Activated CD4-positive, alpha-beta memory T cell treated with anti-CD3 and anti-CD28 coated beads for 36 hours (primary cell): ENCODE measurements at regions of chr2 and their contacts with region 1.

Region 1: DNA sequence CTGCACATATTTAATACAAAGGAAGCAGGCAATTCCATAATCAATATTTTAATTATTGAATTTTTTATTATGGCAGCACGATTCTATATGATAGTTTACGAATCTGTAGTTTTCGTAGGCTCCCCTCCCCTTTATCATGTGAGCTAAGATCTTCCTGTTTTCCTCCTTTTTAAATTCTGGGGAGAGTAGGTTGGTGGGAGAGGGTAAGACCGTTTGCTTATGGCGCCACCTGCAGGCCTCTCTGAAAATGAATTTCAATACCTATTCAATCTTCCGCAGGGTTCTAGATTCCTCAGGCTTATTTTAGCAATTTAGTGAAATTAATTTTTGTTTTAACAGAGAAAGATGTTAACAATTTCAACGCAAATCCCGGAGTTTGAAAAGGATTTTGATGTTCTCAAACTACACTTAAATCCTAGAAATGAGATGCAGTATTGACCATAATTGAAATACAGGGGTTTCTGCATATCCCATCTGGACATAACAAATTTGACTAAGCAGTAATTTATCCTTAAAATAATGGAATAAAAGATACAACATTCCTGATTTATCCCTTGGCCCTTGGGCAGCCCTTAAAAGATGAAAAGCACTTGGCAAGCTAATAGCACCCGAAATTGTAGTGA is 12.8 kb upstream of the GBX2 start:
- DNase-seq: peak; percentile 49
- H3K4me3 Mint-ChIP-seq: no peak overlapping the region
- H3K27ac Mint-ChIP-seq: peak overlapping the region; percentile 30
- H3K4me1 Mint-ChIP-seq: peaks cover 7% of the 10 kb centered on the region
- H3K27me3 Mint-ChIP-seq: peaks cover 63% of the 10 kb centered on the region

Region 2: GRCh38 chr2:234951664-234952269 is 1229.2 kb before region 1 on chr2 and contains the start of gene SH3BP4:
- CTCF ChIA-PET with region 1: no interaction called
- POLR2A ChIA-PET with region 1: no interaction called
- intact Hi-C with region 1: loop called (anchors 5 kb)
- DNase-seq: peak; percentile 53
- H3K4me3 Mint-ChIP-seq: peak within 1 kb of the TSS; percentile 64
- H3K27ac Mint-ChIP-seq: no peak within 1 kb of the TSS
- H3K4me1 Mint-ChIP-seq: peaks cover 3% of the 10 kb centered on the region
- H3K27me3 Mint-ChIP-seq: peaks cover 50% of the 10 kb centered on the region
- total RNA-seq, gene SH3BP4: 0.10 to 0.46 TPM

Region 3: DNA sequence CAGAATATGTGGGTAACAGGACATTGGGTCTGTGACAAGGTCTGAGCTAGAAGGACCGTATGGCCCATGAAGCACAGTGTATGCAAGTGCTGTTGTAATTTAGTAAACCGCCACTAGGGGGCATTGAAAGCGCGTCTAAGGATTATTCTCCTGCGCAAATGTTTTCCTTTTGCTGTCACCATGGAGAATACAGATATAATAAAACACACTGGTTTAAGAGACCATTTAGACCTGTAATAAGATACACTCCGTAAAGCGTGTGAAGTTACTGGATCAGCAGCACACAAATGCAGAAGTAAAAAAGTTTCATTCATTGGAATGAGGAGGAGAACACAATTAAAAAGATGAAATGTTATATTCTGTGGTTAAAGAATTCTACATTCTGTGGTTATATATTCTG is 414.7 kb before region 1 on chr2:
- CTCF ChIA-PET with region 1: interaction called, 16 read pairs
- POLR2A ChIA-PET with region 1: no interaction called
- intact Hi-C with region 1: loop called (anchors 1 kb)
- DNase-seq: peak; percentile 58
- H3K4me3 Mint-ChIP-seq: no peak overlapping the region
- H3K27ac Mint-ChIP-seq: no peak overlapping the region
- H3K4me1 Mint-ChIP-seq: peaks cover 2% of the 10 kb centered on the region
- H3K27me3 Mint-ChIP-seq: peaks cover 5% of the 10 kb centered on the region

Region 4: GRCh38 chr2:235779444-235779896 is 401.5 kb before region 1 on chr2:
- CTCF ChIA-PET with region 1: interaction called, 27 read pairs
- POLR2A ChIA-PET with region 1: no interaction called
- intact Hi-C with region 1: loop called (anchors 1 kb)
- DNase-seq: peak; percentile 76
- H3K4me3 Mint-ChIP-seq: no peak overlapping the region
- H3K27ac Mint-ChIP-seq: no peak overlapping the region
- H3K4me1 Mint-ChIP-seq: no peaks in the 10 kb centered on the region
- H3K27me3 Mint-ChIP-seq: peaks cover 21% of the 10 kb centered on the region

Region 5: DNA sequence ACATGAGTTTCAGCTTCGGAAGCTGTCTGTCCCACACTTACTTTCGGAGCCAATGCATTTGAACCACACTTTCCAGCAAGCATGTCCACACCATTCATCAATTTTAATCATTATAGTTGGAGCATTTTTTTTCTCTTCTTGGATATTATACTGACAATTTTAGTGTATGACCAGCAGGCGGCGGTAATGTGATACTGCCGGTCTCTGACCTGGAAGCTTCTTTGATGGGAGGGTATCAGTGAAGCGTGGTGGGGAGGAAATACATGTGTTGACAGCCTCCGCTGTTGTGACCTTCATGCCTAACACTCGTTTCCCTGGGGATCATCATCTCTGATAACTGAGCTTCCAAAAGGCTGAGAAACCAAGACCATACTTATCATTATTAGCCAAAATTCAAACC is 244.4 kb before region 1 on chr2:
- CTCF ChIA-PET with region 1: interaction called, 6 read pairs
- POLR2A ChIA-PET with region 1: no interaction called
- intact Hi-C with region 1: loop called (anchors 10 kb)
- DNase-seq: no peak
- H3K4me3 Mint-ChIP-seq: no peak overlapping the region
- H3K27ac Mint-ChIP-seq: no peak overlapping the region
- H3K4me1 Mint-ChIP-seq: no peaks in the 10 kb centered on the region
- H3K27me3 Mint-ChIP-seq: peaks cover 9% of the 10 kb centered on the region

Region 6: DNA sequence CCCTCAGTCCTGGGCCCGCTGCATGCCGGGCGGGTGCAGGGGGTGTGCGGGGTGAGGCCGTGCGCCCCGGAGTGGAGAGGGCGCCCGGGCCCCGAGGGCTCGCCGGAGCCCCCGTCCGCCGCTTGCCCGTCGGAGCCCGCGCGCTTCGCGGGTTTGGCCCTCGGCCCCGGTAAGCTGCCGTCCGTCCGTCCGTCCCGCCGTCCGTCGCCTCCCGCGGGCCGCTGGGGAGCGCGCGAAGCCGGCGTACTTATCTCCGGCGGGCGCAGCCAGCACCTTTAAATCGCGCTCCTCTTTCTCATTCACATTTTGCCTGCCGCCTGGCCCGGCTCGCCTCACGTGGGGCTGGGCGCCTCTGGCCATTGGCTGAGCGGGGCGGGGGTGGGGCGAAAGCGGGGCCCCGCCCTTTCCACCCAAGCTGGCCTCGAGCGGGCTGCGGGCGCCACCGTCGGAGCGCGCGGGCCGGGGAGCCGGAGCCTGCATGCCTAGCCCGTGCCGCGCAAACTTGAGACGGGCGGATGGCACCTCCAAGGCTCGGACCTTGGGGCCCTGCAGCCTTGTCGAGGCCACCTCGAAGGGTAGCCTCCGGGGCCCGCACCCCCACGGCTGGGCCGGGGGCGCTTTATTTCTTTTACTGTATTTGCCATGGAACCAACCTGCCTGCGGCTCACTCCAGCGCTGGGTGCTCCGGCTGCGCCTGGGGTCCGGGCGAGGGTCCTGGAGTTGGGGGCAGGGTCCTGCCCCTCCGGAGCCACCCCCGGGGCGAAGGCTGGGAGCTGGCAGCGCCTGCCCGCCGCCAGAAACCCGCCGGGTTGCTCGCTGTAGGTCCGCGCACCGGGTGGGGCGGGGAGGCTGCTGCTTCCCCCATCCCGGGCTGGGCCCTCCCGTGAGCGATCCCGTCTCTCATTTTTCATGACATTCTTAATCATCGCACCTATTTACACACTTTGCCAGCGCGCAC is 12.6 kb before region 1 on chr2 and contains the start of gene GBX2:
- CTCF ChIA-PET with region 1: interaction called, 12 read pairs
- POLR2A ChIA-PET with region 1: no interaction called
- intact Hi-C with region 1: loop called (anchors 1 kb)
- DNase-seq: no peak
- H3K4me3 Mint-ChIP-seq: no peak within 1 kb of the TSS
- H3K27ac Mint-ChIP-seq: peak within 1 kb of the TSS; percentile 60
- H3K4me1 Mint-ChIP-seq: peaks cover 17% of the 10 kb centered on the region
- H3K27me3 Mint-ChIP-seq: peaks cover 56% of the 10 kb centered on the region
- total RNA-seq, gene GBX2: not detected